Activated CD4-positive, alpha-beta memory T cell treated with anti-CD3 and anti-CD28 coated beads for 36 hours (primary cell): ENCODE measurements at regions of chr9 and their contacts with region 1.

Region 1: GRCh38 chr9:88007206-88007631 is 32.9 kb upstream of the CDK20 start:
- DNase-seq: peak; percentile 88
- H3K4me3 Mint-ChIP-seq: peak overlapping the region; percentile 58
- H3K27ac Mint-ChIP-seq: no peak overlapping the region
- H3K4me1 Mint-ChIP-seq: peaks cover 14% of the 10 kb centered on the region
- H3K27me3 Mint-ChIP-seq: peaks cover 14% of the 10 kb centered on the region

Region 2: GRCh38 chr9:87375397-87376073 is 631.7 kb before region 1 on chr9:
- CTCF ChIA-PET with region 1: no interaction called
- POLR2A ChIA-PET with region 1: no interaction called
- intact Hi-C with region 1: loop called (anchors 1 kb)
- DNase-seq: no peak
- H3K4me3 Mint-ChIP-seq: no peak overlapping the region
- H3K27ac Mint-ChIP-seq: no peak overlapping the region
- H3K4me1 Mint-ChIP-seq: peaks cover 10% of the 10 kb centered on the region
- H3K27me3 Mint-ChIP-seq: peaks cover 27% of the 10 kb centered on the region

Region 3: DNA sequence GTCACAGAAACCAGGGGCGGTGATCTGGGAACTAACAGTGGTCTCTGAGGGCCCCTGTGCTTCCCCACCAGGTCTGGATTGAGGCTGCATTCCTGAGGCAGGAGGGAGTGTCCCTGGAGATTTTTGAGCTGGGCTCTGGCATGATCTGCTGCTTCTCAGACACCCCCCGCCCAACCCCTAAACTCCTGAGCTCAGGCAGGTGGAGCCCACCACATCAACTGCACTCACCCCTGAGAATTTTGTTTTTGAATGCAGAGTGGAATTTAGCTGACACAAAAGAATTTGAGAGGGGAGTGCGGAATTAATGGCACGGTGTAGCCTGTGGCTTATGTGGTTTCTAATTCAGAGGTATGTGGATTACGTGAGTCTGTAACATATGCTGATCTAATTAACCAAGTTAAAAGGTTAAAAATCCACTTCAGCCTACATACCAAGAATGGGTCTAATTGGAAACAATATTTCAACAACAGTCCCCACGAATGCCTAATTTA is 305.2 kb before region 1 on chr9:
- CTCF ChIA-PET with region 1: no interaction called
- POLR2A ChIA-PET with region 1: no interaction called
- intact Hi-C with region 1: loop called (anchors 10 kb)
- DNase-seq: no peak
- H3K4me3 Mint-ChIP-seq: no peak overlapping the region
- H3K27ac Mint-ChIP-seq: no peak overlapping the region
- H3K4me1 Mint-ChIP-seq: peaks cover 10% of the 10 kb centered on the region
- H3K27me3 Mint-ChIP-seq: peaks cover 5% of the 10 kb centered on the region

Region 4: DNA sequence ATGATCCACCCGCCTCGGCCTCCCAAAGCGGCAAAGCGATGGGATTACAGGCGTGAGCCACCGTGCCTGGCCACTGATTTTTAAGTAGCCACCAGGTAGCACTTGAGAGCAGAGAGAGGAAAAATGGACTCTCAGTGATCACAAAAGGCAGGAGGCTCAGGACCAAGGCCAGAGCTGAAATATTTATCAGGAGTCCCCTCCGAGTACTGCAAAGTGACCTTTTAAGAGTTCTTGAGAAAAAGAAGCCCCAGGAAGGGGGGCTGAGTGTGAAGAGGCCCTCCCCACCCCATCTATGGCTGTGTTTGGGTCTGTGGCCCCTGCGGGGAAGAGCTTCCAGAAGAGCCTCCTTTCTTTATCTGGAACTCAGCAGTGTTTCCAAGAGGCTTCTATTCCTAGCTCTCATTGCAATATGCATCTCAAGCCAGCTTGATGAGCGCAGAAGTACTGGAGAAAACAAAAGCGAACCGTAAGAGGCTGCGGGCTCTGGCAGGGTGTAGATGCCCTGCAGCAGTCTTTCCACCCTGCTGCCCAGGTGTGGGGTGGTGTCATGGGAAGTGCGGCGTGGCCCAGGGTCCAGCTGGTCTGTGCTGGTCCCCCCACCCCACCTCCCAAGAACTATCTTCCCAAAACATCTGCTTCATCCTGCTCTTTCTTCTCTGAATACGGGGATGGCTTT is 42.6 kb after region 1 on chr9:
- CTCF ChIA-PET with region 1: no interaction called
- POLR2A ChIA-PET with region 1: interaction called, 3 read pairs
- intact Hi-C with region 1: loop called (anchors 1 kb)
- DNase-seq: no peak
- H3K4me3 Mint-ChIP-seq: no peak overlapping the region
- H3K27ac Mint-ChIP-seq: no peak overlapping the region
- H3K4me1 Mint-ChIP-seq: peaks cover 12% of the 10 kb centered on the region
- H3K27me3 Mint-ChIP-seq: peaks cover 20% of the 10 kb centered on the region

Region 5: DNA sequence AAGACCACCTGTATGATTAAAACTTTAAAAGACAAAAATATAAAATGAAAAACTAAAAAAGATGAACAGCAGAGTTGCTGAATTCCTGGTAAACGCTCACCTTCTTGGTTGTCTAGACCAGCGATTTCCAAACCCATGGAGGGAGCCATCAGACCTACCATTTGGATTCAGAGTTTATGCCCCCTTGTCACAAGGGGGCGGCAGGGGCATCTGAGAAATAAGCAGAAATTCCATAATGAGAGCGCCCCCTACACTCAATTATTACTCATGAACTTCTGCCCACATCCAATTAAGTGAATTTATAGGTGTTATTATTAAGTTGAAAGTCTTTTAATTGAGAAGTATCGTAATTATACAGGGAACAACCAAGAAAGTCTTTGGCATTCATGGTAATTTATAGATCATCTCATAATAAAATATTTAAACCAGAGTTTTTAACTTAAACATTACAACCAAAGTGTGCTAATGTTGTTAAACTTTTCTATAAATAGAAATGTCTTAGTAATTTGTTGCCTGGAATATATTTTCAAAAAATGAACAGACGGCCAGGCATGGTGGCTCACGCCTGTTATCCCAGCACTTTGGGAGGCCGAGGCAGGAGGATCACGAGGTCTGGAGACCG is 166.3 kb after region 1 on chr9:
- CTCF ChIA-PET with region 1: no interaction called
- POLR2A ChIA-PET with region 1: no interaction called
- intact Hi-C with region 1: no loop called
- DNase-seq: peak; percentile 58
- H3K4me3 Mint-ChIP-seq: no peak overlapping the region
- H3K27ac Mint-ChIP-seq: no peak overlapping the region
- H3K4me1 Mint-ChIP-seq: peaks cover under 1% of the 10 kb centered on the region
- H3K27me3 Mint-ChIP-seq: peaks cover 11% of the 10 kb centered on the region

Region 6: DNA sequence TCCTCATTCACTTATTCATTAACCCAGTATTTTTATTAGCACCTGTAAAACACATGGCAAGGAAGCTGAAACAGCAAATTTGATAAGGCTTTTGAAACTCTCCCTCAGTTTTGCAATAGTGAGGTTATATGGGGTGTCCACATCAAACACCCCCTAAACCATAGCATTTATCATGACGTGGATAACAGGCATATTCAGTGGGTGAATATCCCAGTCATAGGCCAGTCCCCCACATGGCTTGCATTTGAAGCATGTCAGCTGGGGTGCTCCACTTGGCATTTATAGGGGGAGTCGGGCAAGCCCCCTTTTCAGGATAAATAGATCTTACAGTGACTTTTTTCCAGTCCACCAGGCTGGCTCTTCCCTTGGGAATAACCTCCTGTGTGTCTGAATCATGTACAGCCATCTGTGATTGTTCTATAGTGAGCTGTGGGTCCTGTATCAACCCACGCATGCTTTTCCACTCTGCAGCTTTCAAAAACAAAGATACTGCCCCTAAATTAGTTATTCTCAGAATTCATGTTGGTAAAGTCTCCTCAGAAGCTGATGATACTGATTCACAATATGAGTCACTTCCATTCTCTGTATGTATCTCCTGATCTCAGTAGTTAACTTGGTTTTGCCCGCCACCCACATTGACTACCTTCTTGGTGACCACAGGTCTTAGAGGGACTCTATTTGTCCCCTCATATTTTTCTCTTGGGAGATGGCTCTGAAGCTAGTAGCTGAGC is 296.7 kb after region 1 on chr9:
- CTCF ChIA-PET with region 1: no interaction called
- POLR2A ChIA-PET with region 1: interaction called, 3 read pairs
- intact Hi-C with region 1: loop called (anchors 1 kb)
- DNase-seq: peak; percentile 80
- H3K4me3 Mint-ChIP-seq: peak overlapping the region; percentile 33
- H3K27ac Mint-ChIP-seq: no peak overlapping the region
- H3K4me1 Mint-ChIP-seq: peaks cover 21% of the 10 kb centered on the region
- H3K27me3 Mint-ChIP-seq: peaks cover 26% of the 10 kb centered on the region

Region 7: GRCh38 chr9:88574953-88575352 is 567.7 kb after region 1 on chr9:
- CTCF ChIA-PET with region 1: no interaction called
- POLR2A ChIA-PET with region 1: no interaction called
- intact Hi-C with region 1: no loop called
- DNase-seq: no peak
- H3K4me3 Mint-ChIP-seq: no peak overlapping the region
- H3K27ac Mint-ChIP-seq: no peak overlapping the region
- H3K4me1 Mint-ChIP-seq: peaks cover 3% of the 10 kb centered on the region
- H3K27me3 Mint-ChIP-seq: peaks cover 14% of the 10 kb centered on the region